Activated CD8-positive, alpha-beta T cell treated with anti-CD3 and anti-CD28 coated beads for 36 hours (primary cell): ENCODE measurements at regions of chr12 and their contacts with region 1.

Region 1: DNA sequence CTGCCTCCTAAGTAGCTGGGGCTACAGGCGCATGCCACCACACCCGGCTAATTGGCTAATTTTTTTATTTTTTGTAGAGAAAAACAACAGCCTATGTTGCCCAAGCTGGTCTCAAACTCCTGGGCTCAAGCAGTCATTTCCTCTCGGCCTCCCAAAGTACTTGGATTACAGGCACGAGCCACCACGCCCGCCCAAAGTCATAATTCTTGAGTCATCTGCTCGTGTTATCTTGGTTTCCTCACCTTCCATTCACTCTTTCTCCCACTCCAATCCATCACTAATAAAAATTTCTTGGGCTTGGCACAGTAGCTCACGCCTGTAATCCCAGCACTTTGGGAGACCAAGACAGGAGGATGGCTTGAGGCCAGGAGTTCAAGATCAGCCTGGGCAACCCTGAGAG is 32.0 kb downstream of the ITGA7 start:
- DNase-seq: no peak
- ATAC-seq: no peak
- H3K4me3 Mint-ChIP-seq: no peak overlapping the region
- H3K27ac Mint-ChIP-seq: no peak overlapping the region
- H3K4me1 Mint-ChIP-seq: no peaks in the 10 kb centered on the region
- H3K27me3 Mint-ChIP-seq: peaks cover 5% of the 10 kb centered on the region
- CTCF ChIP-seq: no peak

Region 2: GRCh38 chr12:55572168-55572567 is 103.5 kb before region 1 on chr12 and contains the start of gene OR2AP1:
- CTCF ChIA-PET with region 1: no interaction called
- POLR2A ChIA-PET with region 1: no interaction called
- intact Hi-C with region 1: no loop called
- DNase-seq: no peak
- ATAC-seq: no peak
- H3K4me3 Mint-ChIP-seq: no peak within 1 kb of the TSS
- H3K27ac Mint-ChIP-seq: no peak within 1 kb of the TSS
- H3K4me1 Mint-ChIP-seq: no peaks in the 10 kb centered on the region
- H3K27me3 Mint-ChIP-seq: peaks cover 10% of the 10 kb centered on the region
- CTCF ChIP-seq: no peak
- total RNA-seq, gene OR2AP1: not detected

Region 3: GRCh38 chr12:55652352-55652751 is 23.3 kb before region 1 on chr12:
- CTCF ChIA-PET with region 1: interaction called, 17 read pairs
- POLR2A ChIA-PET with region 1: no interaction called
- intact Hi-C with region 1: no loop called
- DNase-seq: peak; percentile 46
- ATAC-seq: peak; percentile 94
- H3K4me3 Mint-ChIP-seq: no peak overlapping the region
- H3K27ac Mint-ChIP-seq: peak overlapping the region; percentile 42
- H3K4me1 Mint-ChIP-seq: peaks cover 20% of the 10 kb centered on the region
- H3K27me3 Mint-ChIP-seq: peaks cover 1% of the 10 kb centered on the region
- CTCF ChIP-seq: peak; percentile 12

Region 4: DNA sequence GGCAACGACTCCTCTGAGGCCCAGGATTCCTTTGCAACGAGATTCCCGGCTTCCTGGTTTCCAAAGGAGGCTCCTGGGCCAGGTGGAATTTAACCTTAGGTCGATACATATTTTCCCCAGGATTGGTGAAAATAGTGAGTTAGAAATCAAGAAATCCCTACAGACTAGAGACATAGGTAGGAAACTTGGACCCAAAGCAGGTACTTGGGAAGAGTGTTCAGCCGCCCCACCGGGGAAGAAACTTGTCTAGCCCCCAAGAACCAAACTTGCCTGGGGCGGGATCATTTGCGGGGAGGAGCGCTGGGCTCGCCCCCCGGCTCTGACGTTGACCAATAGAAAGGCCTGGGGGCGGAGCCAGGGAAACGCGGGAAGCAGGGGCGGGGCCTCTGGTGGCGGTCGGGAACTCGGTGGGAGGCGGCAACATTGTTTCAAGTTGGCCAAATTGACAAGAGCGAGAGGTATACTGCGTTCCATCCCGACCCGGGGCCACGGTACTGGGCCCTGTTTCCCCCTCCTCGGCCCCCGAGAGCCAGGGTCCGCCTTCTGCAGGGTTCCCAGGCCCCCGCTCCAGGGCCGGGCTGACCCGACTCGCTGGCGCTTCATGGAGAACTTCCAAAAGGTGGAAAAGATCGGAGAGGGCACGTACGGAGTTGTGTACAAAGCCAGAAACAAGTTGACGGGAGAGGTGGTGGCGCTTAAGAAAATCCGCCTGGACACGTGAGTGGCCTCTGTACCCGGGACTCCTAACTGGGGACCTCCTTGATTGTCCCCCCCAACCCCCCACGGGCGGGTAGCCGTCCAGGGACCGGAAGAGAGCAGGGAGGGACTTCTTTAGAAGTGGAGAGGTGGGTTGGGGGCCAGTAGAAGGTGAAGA is 291.0 kb after region 1 on chr12 and contains the start of gene CDK2:
- CTCF ChIA-PET with region 1: no interaction called
- POLR2A ChIA-PET with region 1: no interaction called
- intact Hi-C with region 1: no loop called
- DNase-seq: peak; percentile 96
- ATAC-seq: peak; percentile 98
- H3K4me3 Mint-ChIP-seq: peak within 1 kb of the TSS; percentile 98
- H3K27ac Mint-ChIP-seq: peak within 1 kb of the TSS; percentile 89
- H3K4me1 Mint-ChIP-seq: peaks cover 22% of the 10 kb centered on the region
- H3K27me3 Mint-ChIP-seq: no peaks in the 10 kb centered on the region
- CTCF ChIP-seq: no peak
- total RNA-seq, gene CDK2: 86.7 to 90.1 TPM